OCI-LY7 (cell line): ENCODE measurements at regions of chr17 and their contacts with region 1.

Region 1: DNA sequence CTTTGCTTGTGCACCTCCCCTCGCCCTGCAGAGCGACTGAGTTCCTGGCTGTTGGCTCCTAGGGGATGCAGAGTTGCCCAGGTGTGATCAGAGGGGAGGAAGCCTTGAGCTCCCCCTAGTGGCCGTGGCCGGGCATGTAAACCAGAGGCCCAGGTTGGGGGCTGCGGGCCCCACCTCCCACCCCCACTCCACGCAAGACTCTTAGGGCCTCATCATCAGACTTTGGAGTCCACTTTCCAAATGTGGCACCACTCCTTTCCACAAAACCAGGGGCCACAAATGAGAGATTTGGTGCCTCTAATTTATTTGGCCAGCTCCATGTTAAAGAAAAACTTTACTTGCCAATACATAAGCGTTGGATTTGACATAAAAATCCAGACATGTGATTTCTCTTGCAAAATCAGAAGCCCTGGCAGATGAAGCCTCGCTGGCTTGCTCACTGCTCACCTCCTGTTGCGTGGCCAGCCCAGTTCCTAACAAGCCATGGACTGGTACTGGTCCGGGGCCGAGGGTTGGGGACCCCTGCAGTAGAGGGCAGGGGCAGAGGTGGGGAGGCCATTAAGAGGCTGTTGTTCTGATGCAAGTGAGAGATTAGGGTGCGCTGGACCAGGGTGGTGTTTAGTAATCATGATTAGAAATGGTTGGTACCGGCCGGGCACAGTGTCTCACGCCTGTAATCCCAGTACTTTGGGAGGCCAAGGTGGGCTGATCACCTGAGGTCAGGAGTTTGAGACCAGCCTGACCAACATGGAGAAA is 28.7 kb upstream of the GAS7 start:
- DNase-seq: peak; percentile 21
- H3K4me3 ChIP-seq: no peak overlapping the region
- H3K27ac ChIP-seq: no peak overlapping the region
- H3K4me1 ChIP-seq: no peaks in the 10 kb centered on the region
- CTCF ChIP-seq: peak; percentile 86

Region 2: DNA sequence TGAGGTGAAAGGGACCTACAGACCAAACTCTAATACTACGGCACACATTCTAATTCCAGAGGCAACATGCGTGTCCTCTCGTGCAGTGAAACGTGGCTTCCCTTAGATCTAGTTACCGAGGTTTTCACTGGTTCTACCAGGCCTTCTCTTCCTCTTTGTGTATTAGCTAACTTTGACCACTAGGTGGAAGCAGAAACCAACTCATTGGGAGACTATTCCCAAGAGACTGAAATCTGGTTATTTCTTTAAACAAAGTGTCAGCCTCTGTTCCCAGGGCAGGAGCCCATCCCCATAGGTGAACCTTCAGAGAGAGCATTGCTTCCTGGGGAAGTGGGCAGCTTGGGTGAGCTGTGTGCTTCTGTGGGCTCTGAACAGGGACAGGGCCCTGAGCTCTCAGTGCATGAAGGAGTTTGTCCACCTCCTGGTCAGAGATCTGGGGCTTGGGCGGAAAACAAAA is 302.3 kb before region 1 on chr17:
- CTCF ChIA-PET with region 1: no interaction called
- POLR2A ChIA-PET with region 1: no interaction called
- intact Hi-C with region 1: loop called (anchors 5 kb)
- DNase-seq: peak; percentile 80
- H3K4me3 ChIP-seq: no peak overlapping the region
- H3K27ac ChIP-seq: no peak overlapping the region
- H3K4me1 ChIP-seq: no peaks in the 10 kb centered on the region
- CTCF ChIP-seq: peak; percentile 89

Region 3: GRCh38 chr17:9968902-9969617 is 258.0 kb before region 1 on chr17:
- CTCF ChIA-PET with region 1: no interaction called
- POLR2A ChIA-PET with region 1: no interaction called
- intact Hi-C with region 1: loop called (anchors 5 kb)
- DNase-seq: no peak
- H3K4me3 ChIP-seq: no peak overlapping the region
- H3K27ac ChIP-seq: no peak overlapping the region
- H3K4me1 ChIP-seq: no peaks in the 10 kb centered on the region
- CTCF ChIP-seq: no peak

Region 4: GRCh38 chr17:10357768-10358167 is 130.7 kb after region 1 on chr17:
- CTCF ChIA-PET with region 1: no interaction called
- POLR2A ChIA-PET with region 1: no interaction called
- intact Hi-C with region 1: no loop called
- DNase-seq: peak; percentile 20
- H3K4me3 ChIP-seq: no peak overlapping the region
- H3K27ac ChIP-seq: no peak overlapping the region
- H3K4me1 ChIP-seq: no peaks in the 10 kb centered on the region
- CTCF ChIP-seq: peak; percentile 80